IMR-90 (cell line): ENCODE measurements at regions of chr6 and their contacts with region 1.

Region 1: DNA sequence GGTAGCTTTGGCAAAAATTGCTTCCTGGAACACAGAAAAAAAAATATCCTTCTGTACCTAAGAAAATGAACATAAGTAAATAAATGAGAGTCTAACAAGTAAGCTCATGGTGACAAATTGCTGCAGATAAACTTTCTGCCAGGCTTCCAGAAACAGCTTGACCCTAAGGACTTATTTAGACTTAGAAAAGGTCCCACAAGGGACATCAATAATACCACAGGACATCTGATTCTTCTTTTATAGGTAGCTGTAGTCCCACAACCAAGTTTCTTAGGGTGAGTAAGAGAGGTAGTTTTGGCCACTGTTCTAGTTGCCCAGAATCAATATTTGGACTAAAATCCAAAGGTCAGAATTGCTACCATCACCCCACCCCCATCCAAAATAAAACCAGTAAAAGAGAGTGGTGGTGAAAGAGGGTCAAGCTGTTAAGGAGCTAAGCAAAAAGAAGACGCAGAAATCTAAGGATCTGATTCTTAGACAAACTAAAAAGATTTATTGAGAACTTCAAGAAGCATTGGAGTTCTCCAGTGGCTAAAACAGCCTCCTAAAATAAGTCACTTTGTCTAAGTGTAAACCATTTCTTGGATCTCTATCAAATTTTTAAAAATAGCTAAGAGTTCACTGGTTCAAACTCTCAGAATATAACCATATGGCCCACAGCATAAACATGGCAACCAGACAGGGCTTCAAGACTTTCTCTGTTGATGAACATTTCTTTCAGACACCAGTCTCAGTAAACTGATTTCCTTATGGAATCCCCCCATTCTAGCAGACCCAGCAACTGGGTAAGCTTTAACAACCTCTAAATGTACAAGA is 180.6 kb downstream of the PTPRK start:
- DNase-seq: peak; percentile 74
- ATAC-seq: peak; percentile 59
- H3K4me3 ChIP-seq: no peak overlapping the region
- H3K27ac ChIP-seq: peak overlapping the region; percentile 58; the same call in 1 of the 2 replicates
- H3K4me1 ChIP-seq: peaks cover 9% of the 10 kb centered on the region
- H3K27me3 ChIP-seq: no peaks in the 10 kb centered on the region
- CTCF ChIP-seq: no peak
- POLR2A ChIP-seq: no peak
- RAD21 ChIP-seq: no peak

Region 2: DNA sequence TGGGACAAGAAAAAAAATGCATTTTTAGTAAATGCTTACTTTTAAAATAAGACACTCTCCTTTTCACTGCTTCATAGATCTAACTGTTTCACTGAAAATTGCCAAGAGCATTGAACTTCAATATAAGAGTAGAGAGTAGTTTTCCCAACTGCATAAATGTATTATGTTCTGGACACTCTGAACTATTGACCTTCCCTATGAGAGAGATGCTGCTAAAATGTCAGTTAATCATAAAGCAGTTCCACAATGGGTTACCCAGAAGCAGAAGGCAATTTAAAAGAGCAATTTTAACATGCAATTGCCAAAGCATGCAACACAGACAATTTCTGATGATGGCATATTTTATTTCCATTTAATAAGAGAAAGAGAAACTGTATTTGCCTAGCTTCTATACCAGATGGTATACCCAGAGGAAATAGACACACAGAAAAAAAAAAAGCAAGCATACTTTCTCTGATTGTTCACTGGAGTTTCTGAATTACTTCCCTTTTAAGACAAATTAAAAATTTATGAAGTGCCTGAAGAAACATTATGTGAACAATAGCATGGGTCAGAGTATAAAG is 159.9 kb before region 1 on chr6:
- CTCF ChIA-PET with region 1: no interaction called
- POLR2A ChIA-PET with region 1: no interaction called
- dilution Hi-C with region 1: no loop called
- in situ Hi-C with region 1: no loop called
- intact Hi-C with region 1: no loop called
- DNase-seq: no peak
- ATAC-seq: no peak
- H3K4me3 ChIP-seq: no peak overlapping the region
- H3K27ac ChIP-seq: no peak overlapping the region
- H3K4me1 ChIP-seq: no peaks in the 10 kb centered on the region
- H3K27me3 ChIP-seq: no peaks in the 10 kb centered on the region
- CTCF ChIP-seq: no peak
- POLR2A ChIP-seq: no peak
- RAD21 ChIP-seq: no peak

Region 3: GRCh38 chr6:128508588-128509296 is 168.9 kb after region 1 on chr6:
- CTCF ChIA-PET with region 1: no interaction called
- POLR2A ChIA-PET with region 1: no interaction called
- dilution Hi-C with region 1: no loop called
- in situ Hi-C with region 1: loop called (anchors 10 kb)
- intact Hi-C with region 1: no loop called
- DNase-seq: peak; percentile 93
- ATAC-seq: peak; percentile 66
- H3K4me3 ChIP-seq: no peak overlapping the region
- H3K27ac ChIP-seq: no peak overlapping the region; the same call in 1 of the 2 replicates
- H3K4me1 ChIP-seq: peaks cover 24% of the 10 kb centered on the region
- H3K27me3 ChIP-seq: no peaks in the 10 kb centered on the region
- CTCF ChIP-seq: no peak
- POLR2A ChIP-seq: no peak
- RAD21 ChIP-seq: no peak

Region 4: GRCh38 chr6:128725271-128726233 is 385.7 kb after region 1 on chr6:
- CTCF ChIA-PET with region 1: no interaction called
- POLR2A ChIA-PET with region 1: no interaction called
- dilution Hi-C with region 1: no loop called
- in situ Hi-C with region 1: no loop called
- intact Hi-C with region 1: loop called (anchors 10 kb)
- DNase-seq: peak; percentile 38
- ATAC-seq: no peak
- H3K4me3 ChIP-seq: no peak overlapping the region
- H3K27ac ChIP-seq: no peak overlapping the region
- H3K4me1 ChIP-seq: peaks cover 1% of the 10 kb centered on the region; the same call in 1 of the 2 replicates
- H3K27me3 ChIP-seq: no peaks in the 10 kb centered on the region; the same call in 1 of the 2 replicates
- CTCF ChIP-seq: peak; percentile 55
- POLR2A ChIP-seq: no peak
- RAD21 ChIP-seq: no peak; the same call in 1 of the 2 replicates